Caco-2 (cell line): ENCODE measurements at regions of chr16 and their contacts with region 1.

Region 1: DNA sequence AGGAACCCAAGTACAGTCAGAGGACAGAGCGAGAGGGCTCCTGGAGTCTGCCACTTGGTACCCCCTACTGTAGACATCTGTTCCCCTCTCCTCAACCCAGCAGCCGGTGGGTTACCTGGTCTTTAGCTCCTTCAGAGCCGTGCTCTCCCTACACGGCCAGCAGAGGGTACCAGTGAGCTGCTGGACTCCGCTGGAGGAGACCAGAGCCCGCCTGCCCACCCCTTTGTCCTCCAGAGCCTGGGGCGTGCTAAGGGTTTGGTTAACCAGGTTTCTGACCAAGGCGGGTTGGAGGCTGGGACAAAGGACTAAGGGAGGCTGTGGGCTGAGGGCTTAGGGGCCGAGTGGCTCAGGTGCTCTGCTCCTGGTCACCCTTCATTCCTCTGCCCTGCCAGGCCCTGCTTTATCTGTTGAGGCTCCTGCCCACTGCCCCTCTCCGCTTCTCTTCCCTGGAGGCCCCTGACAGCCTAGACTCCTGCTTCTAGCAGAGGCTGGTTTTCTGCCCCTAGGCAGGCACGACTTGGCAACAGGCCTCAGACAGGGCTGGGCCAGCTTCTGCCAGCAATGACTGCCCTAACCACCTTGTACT is 2.7 kb upstream of the HSD11B2 start:
- DNase-seq: peak; percentile 80 to 83
- H3K4me3 ChIP-seq: no peak overlapping the region
- H3K4me3 Mint-ChIP-seq: no peak overlapping the region
- H3K27ac Mint-ChIP-seq: no peak overlapping the region
- H3K4me1 ChIP-seq: peaks cover 32% of the 10 kb centered on the region
- H3K4me1 Mint-ChIP-seq: peaks cover 14% of the 10 kb centered on the region
- H3K27me3 ChIP-seq: no peaks in the 10 kb centered on the region
- H3K27me3 Mint-ChIP-seq: no peaks in the 10 kb centered on the region
- CTCF ChIP-seq: peak; percentile 89 to 97

Region 2: GRCh38 chr16:67216612-67217490 is 211.4 kb before region 1 on chr16:
- CTCF ChIA-PET with region 1: no interaction called
- POLR2A ChIA-PET with region 1: no interaction called
- intact Hi-C with region 1: no loop called
- DNase-seq: no peak
- H3K4me3 ChIP-seq: no peak overlapping the region
- H3K4me3 Mint-ChIP-seq: no peak overlapping the region
- H3K27ac Mint-ChIP-seq: no peak overlapping the region
- H3K4me1 ChIP-seq: peaks cover 15% of the 10 kb centered on the region; the same call in 1 of the 2 replicates
- H3K4me1 Mint-ChIP-seq: peaks cover 14% of the 10 kb centered on the region
- H3K27me3 ChIP-seq: no peaks in the 10 kb centered on the region
- H3K27me3 Mint-ChIP-seq: peaks cover 4% of the 10 kb centered on the region
- CTCF ChIP-seq: no peak

Region 3: GRCh38 chr16:67246934-67247697 is 181.1 kb before region 1 on chr16 and contains the start of gene FHOD1:
- CTCF ChIA-PET with region 1: interaction called, 15 read pairs
- POLR2A ChIA-PET with region 1: interaction called, 12 read pairs
- intact Hi-C with region 1: no loop called
- DNase-seq: peak; percentile 98 to 99
- H3K4me3 ChIP-seq: peak within 1 kb of the TSS; percentile 72
- H3K4me3 Mint-ChIP-seq: peak within 1 kb of the TSS; percentile 95
- H3K27ac Mint-ChIP-seq: peak within 1 kb of the TSS; percentile 87
- H3K4me1 ChIP-seq: peaks cover 27% of the 10 kb centered on the region
- H3K4me1 Mint-ChIP-seq: peaks cover 42% of the 10 kb centered on the region
- H3K27me3 ChIP-seq: peaks cover 6% of the 10 kb centered on the region
- H3K27me3 Mint-ChIP-seq: peaks cover 18% of the 10 kb centered on the region
- CTCF ChIP-seq: peak in 1 of 2 experiments; percentile 36
- total RNA-seq, gene FHOD1: 59.1 and 69.0 TPM in 2 replicates

Region 4: GRCh38 chr16:67372664-67373063 is 55.6 kb before region 1 on chr16:
- CTCF ChIA-PET with region 1: interaction called, 7 read pairs
- POLR2A ChIA-PET with region 1: no interaction called
- intact Hi-C with region 1: loop called (anchors 1 kb)
- DNase-seq: peak in 1 of 2 experiments; percentile 48
- H3K4me3 ChIP-seq: no peak overlapping the region
- H3K4me3 Mint-ChIP-seq: no peak overlapping the region
- H3K27ac Mint-ChIP-seq: no peak overlapping the region
- H3K4me1 ChIP-seq: no peaks in the 10 kb centered on the region
- H3K4me1 Mint-ChIP-seq: no peaks in the 10 kb centered on the region
- H3K27me3 ChIP-seq: no peaks in the 10 kb centered on the region
- H3K27me3 Mint-ChIP-seq: no peaks in the 10 kb centered on the region
- CTCF ChIP-seq: peak; percentile 55 to 58

Region 5: GRCh38 chr16:67415872-67416793 is 12.1 kb before region 1 on chr16 and contains the start of gene ZDHHC1:
- CTCF ChIA-PET with region 1: interaction called, 12 read pairs
- POLR2A ChIA-PET with region 1: interaction called, 4 read pairs
- intact Hi-C with region 1: no loop called
- DNase-seq: no peak
- H3K4me3 ChIP-seq: no peak within 1 kb of the TSS
- H3K4me3 Mint-ChIP-seq: no peak within 1 kb of the TSS
- H3K27ac Mint-ChIP-seq: peak within 1 kb of the TSS; percentile 59
- H3K4me1 ChIP-seq: peaks cover 44% of the 10 kb centered on the region
- H3K4me1 Mint-ChIP-seq: peaks cover 46% of the 10 kb centered on the region
- H3K27me3 ChIP-seq: no peaks in the 10 kb centered on the region
- H3K27me3 Mint-ChIP-seq: no peaks in the 10 kb centered on the region
- CTCF ChIP-seq: no peak
- total RNA-seq, gene ZDHHC1: 1.0 and 1.3 TPM in 2 replicates

Region 6: GRCh38 chr16:67470359-67470758 is 42.1 kb after region 1 on chr16:
- CTCF ChIA-PET with region 1: interaction called, 15 read pairs
- POLR2A ChIA-PET with region 1: no interaction called
- intact Hi-C with region 1: loop called (anchors 1 kb)
- DNase-seq: no peak
- H3K4me3 ChIP-seq: no peak overlapping the region
- H3K4me3 Mint-ChIP-seq: no peak overlapping the region
- H3K27ac Mint-ChIP-seq: no peak overlapping the region
- H3K4me1 ChIP-seq: no peaks in the 10 kb centered on the region
- H3K4me1 Mint-ChIP-seq: no peaks in the 10 kb centered on the region
- H3K27me3 ChIP-seq: no peaks in the 10 kb centered on the region
- H3K27me3 Mint-ChIP-seq: no peaks in the 10 kb centered on the region
- CTCF ChIP-seq: no peak

Region 7: GRCh38 chr16:67595033-67595355 is 166.8 kb after region 1 on chr16:
- CTCF ChIA-PET with region 1: no interaction called
- POLR2A ChIA-PET with region 1: interaction called, 14 read pairs
- intact Hi-C with region 1: no loop called
- DNase-seq: no peak
- H3K4me3 ChIP-seq: no peak overlapping the region
- H3K4me3 Mint-ChIP-seq: no peak overlapping the region
- H3K27ac Mint-ChIP-seq: no peak overlapping the region
- H3K4me1 ChIP-seq: peaks cover 4% of the 10 kb centered on the region; the same call in 1 of the 2 replicates
- H3K4me1 Mint-ChIP-seq: peaks cover 8% of the 10 kb centered on the region
- H3K27me3 ChIP-seq: no peaks in the 10 kb centered on the region
- H3K27me3 Mint-ChIP-seq: no peaks in the 10 kb centered on the region
- CTCF ChIP-seq: no peak